A673 (cell line): ENCODE measurements at regions of chr7 and their contacts with region 1.

Region 1: GRCh38 chr7:92052159-92052558 is 82.1 kb downstream of the CYP51A1 start:
- DNase-seq: no peak
- H3K4me3 ChIP-seq: no peak overlapping the region
- H3K27ac ChIP-seq: no peak overlapping the region
- H3K4me1 ChIP-seq: no peaks in the 10 kb centered on the region
- H3K27me3 ChIP-seq: no peaks in the 10 kb centered on the region
- CTCF ChIP-seq: no peak

Region 2: GRCh38 chr7:92071032-92071431 is 18.9 kb after region 1 on chr7:
- CTCF ChIA-PET with region 1: no interaction called
- POLR2A ChIA-PET with region 1: interaction called, 11 read pairs
- intact Hi-C with region 1: no loop called
- DNase-seq: no peak
- H3K4me3 ChIP-seq: no peak overlapping the region
- H3K27ac ChIP-seq: no peak overlapping the region
- H3K4me1 ChIP-seq: no peaks in the 10 kb centered on the region
- H3K27me3 ChIP-seq: no peaks in the 10 kb centered on the region
- CTCF ChIP-seq: no peak

Region 3: DNA sequence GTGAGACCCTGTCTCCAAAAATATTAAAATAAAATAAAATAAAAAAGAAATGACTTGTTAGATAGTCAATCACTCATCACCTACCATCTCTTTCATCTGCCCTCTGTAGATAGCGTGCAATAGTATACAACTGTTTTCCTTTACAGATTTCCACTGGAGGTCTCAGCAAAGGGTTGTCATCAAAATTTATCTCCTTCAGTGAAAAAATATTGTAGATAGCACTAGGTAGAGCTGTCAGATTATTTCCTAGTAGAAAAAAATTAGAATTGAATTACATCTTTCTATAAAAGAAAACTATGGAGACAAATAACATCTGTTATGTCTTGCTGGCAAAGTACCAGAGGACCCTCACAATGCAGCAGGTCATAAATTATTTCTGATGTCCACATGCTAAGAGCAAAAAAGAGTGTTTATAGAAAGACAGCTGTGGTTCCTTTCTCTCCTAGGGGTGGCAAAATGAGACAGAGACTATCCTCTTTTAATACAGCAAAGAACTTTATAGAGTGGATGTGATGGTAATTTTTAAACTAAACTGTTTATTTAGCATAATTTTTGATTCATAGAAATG is 98.4 kb after region 1 on chr7:
- CTCF ChIA-PET with region 1: no interaction called
- POLR2A ChIA-PET with region 1: no interaction called
- intact Hi-C with region 1: no loop called
- DNase-seq: no peak
- H3K4me3 ChIP-seq: no peak overlapping the region
- H3K27ac ChIP-seq: no peak overlapping the region
- H3K4me1 ChIP-seq: no peaks in the 10 kb centered on the region
- H3K27me3 ChIP-seq: no peaks in the 10 kb centered on the region
- CTCF ChIP-seq: no peak